ENCODE measurements at regions of chr1 and their contacts with region 1.

Region 1: DNA sequence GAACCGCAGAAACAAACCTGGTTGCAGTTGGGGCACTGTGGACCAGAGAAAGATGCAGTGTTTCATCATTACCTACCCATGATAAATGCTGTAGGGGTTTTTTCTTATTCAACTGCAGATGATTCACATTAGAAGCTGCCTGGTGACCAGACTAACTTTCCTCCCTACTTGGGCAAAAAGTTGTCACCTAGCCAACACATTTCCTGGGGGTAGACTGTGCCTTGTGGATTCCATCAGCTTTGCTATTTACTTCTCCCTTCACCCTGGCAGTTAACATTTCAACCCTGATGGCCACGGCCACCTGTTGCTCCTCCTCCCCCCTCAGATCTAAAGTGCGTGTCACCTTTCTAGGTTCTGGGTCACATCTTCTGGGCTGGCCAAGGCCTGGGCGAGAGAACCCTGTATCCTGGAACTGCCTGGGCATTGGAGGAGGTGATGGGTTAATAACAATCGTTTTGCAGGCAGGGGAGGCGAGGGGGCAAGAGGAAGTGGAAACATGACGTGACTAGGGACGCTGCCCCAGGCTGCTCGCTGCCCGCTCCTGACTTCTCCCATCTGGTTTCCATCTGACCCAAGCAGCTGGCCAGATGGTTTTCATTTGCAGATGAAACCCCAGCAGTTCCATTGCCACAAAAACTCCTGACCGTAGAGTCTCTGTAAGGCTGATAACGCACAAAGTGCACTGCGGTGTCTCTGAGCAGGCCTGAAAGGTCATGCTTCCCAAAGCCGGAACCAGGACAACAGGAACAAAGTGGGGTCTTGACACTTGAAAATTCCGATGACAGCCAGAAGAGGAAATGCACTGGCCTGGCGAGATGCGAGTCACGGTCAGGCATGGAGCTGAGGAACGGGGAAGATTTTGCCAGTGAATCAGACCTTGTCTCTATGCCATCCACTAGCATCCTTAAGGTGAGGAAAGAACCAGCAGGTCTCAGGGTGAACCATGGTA is 36.6 kb downstream of the CAPZB start:
- DNase-seq: peak; percentile 61
- H3K4me3 Mint-ChIP-seq: peak overlapping the region; percentile 42
- H3K27ac Mint-ChIP-seq: peak overlapping the region; percentile 91
- H3K4me1 Mint-ChIP-seq: peaks cover 85% of the 10 kb centered on the region
- H3K27me3 Mint-ChIP-seq: no peaks in the 10 kb centered on the region

Region 2: GRCh38 chr1:19374083-19374801 is 74.5 kb before region 1 on chr1:
- CTCF ChIA-PET with region 1: interaction called, 3 read pairs
- POLR2A ChIA-PET with region 1: no interaction called
- intact Hi-C with region 1: loop called (anchors 5 kb)
- DNase-seq: no peak
- H3K4me3 Mint-ChIP-seq: no peak overlapping the region
- H3K27ac Mint-ChIP-seq: no peak overlapping the region
- H3K4me1 Mint-ChIP-seq: peaks cover 40% of the 10 kb centered on the region
- H3K27me3 Mint-ChIP-seq: no peaks in the 10 kb centered on the region

Region 3: GRCh38 chr1:19432943-19433718 is 15.6 kb before region 1 on chr1:
- CTCF ChIA-PET with region 1: interaction called, 5 read pairs
- POLR2A ChIA-PET with region 1: interaction called, 7 read pairs
- intact Hi-C with region 1: loop called (anchors 2 kb)
- DNase-seq: peak; percentile 57
- H3K4me3 Mint-ChIP-seq: no peak overlapping the region
- H3K27ac Mint-ChIP-seq: peak overlapping the region; percentile 31
- H3K4me1 Mint-ChIP-seq: peaks cover 85% of the 10 kb centered on the region
- H3K27me3 Mint-ChIP-seq: no peaks in the 10 kb centered on the region

Region 4: GRCh38 chr1:19460535-19461219 is 11.9 kb after region 1 on chr1:
- CTCF ChIA-PET with region 1: interaction called, 6 read pairs
- POLR2A ChIA-PET with region 1: interaction called, 4 read pairs
- intact Hi-C with region 1: loop called (anchors 1 kb)
- DNase-seq: peak; percentile 59
- H3K4me3 Mint-ChIP-seq: no peak overlapping the region
- H3K27ac Mint-ChIP-seq: peak overlapping the region; percentile 78
- H3K4me1 Mint-ChIP-seq: peaks cover 90% of the 10 kb centered on the region
- H3K27me3 Mint-ChIP-seq: no peaks in the 10 kb centered on the region

Region 5: DNA sequence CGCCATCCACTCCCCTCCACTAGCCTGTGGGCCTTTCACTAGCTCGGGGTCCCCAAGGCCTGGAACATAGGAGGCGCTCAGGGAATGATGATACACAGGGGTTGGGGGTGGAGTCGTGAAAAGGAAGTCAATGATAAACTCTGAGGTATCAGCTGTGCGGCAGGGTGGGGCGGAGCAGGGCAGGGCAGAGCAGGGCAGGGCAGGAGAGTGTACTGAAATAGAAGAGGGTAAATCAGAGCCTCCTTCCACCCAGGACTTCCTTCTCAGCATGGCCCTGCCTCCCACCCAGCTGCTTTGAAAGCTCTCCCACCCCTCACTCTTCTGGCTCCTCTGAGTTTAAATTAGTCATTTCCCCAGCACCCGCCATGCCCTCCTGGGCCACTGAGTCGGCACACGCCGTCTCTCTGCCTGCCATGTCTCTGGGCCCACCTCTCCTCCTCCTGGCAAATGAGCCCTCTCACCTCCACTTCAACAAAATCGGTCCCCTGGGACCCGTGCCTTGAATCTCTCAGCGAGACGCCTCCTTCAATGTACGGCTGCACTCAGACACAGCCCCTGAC is 19.7 kb after region 1 on chr1:
- CTCF ChIA-PET with region 1: interaction called, 3 read pairs
- POLR2A ChIA-PET with region 1: interaction called, 4 read pairs
- intact Hi-C with region 1: loop called (anchors 1 kb)
- DNase-seq: peak; percentile 82
- H3K4me3 Mint-ChIP-seq: peak overlapping the region; percentile 39
- H3K27ac Mint-ChIP-seq: peak overlapping the region; percentile 91
- H3K4me1 Mint-ChIP-seq: peaks cover 89% of the 10 kb centered on the region
- H3K27me3 Mint-ChIP-seq: no peaks in the 10 kb centered on the region

Measured in activated CD4-positive, alpha-beta memory T cell treated with anti-CD3 and anti-CD28 coated beads for 36 hours (primary cell).